A673 (cell line): ENCODE measurements at regions of chr11 and their contacts with region 1.

Region 1: GRCh38 chr11:133197425-133197824 is 334.9 kb downstream of the OPCML start:
- DNase-seq: no peak
- H3K4me3 ChIP-seq: no peak overlapping the region
- H3K27ac ChIP-seq: no peak overlapping the region
- H3K4me1 ChIP-seq: no peaks in the 10 kb centered on the region
- H3K27me3 ChIP-seq: peaks cover 8% of the 10 kb centered on the region
- CTCF ChIP-seq: no peak

Region 2: GRCh38 chr11:131658952-131659351 is 1538.5 kb before region 1 on chr11:
- CTCF ChIA-PET with region 1: interaction called, 15 read pairs
- POLR2A ChIA-PET with region 1: no interaction called
- intact Hi-C with region 1: no loop called
- DNase-seq: no peak
- H3K4me3 ChIP-seq: no peak overlapping the region
- H3K27ac ChIP-seq: no peak overlapping the region
- H3K4me1 ChIP-seq: no peaks in the 10 kb centered on the region
- H3K27me3 ChIP-seq: peaks cover 62% of the 10 kb centered on the region
- CTCF ChIP-seq: no peak